ENCODE measurements at regions of chr6 and their contacts with region 1.

Region 1: GRCh38 chr6:149342525-149342924 is 25.0 kb downstream of the TAB2 start:
- DNase-seq: no peak
- ATAC-seq: peak; percentile 31
- H3K4me3 Mint-ChIP-seq: peak overlapping the region; percentile 36
- H3K27ac Mint-ChIP-seq: peak overlapping the region; percentile 70
- H3K4me1 Mint-ChIP-seq: peaks cover 81% of the 10 kb centered on the region
- H3K27me3 Mint-ChIP-seq: no peaks in the 10 kb centered on the region

Region 2: GRCh38 chr6:149223904-149224351 is 118.6 kb before region 1 on chr6:
- CTCF ChIA-PET with region 1: no interaction called
- POLR2A ChIA-PET with region 1: no interaction called
- intact Hi-C with region 1: no loop called
- DNase-seq: no peak
- ATAC-seq: no peak
- H3K4me3 Mint-ChIP-seq: no peak overlapping the region
- H3K27ac Mint-ChIP-seq: no peak overlapping the region
- H3K4me1 Mint-ChIP-seq: peaks cover 5% of the 10 kb centered on the region
- H3K27me3 Mint-ChIP-seq: no peaks in the 10 kb centered on the region

Region 3: DNA sequence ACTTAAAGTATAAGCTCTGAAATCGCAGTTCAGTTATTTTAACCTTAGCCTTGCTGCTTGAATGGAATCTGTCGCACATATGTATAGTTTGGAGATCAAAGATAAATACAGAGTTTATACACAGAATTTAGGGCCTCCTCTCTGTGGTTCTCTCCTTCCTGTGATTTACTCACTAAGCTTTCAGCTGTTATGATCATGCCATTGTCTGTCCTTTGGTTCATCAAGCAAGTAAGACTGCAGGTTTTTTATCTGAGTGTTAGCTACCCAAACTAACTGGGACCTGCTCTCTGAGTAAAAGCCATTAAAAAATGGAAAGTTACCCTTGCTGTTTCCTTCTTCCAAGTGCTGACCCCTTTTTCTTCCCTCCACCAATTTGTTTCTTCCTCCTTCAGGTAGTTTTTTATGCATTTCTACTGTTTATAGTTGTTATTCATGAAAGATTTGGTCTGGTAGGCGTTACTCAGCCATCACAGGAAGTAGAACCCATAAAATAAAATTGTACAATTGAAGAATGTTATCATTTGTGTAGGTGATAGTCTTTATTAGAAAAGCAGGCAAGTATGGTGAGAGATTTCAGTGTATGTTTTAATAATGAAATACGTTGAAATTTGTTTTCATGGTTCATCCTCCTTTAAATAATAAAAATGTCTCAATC is 23.9 kb after region 1 on chr6:
- CTCF ChIA-PET with region 1: interaction called, 5 read pairs
- POLR2A ChIA-PET with region 1: no interaction called
- intact Hi-C with region 1: loop called in 1 of 2 experiments (anchors 2 kb)
- DNase-seq: no peak
- ATAC-seq: peak; percentile 63
- H3K4me3 Mint-ChIP-seq: no peak overlapping the region
- H3K27ac Mint-ChIP-seq: no peak overlapping the region
- H3K4me1 Mint-ChIP-seq: peaks cover 51% of the 10 kb centered on the region
- H3K27me3 Mint-ChIP-seq: no peaks in the 10 kb centered on the region